Astrocyte of the cerebellum (primary cell): ENCODE measurements at regions of chr7 and their contacts with region 1.

Region 1: GRCh38 chr7:32204361-32205018 is 134.3 kb upstream of the PDE1C start:
- DNase-seq: peak; percentile 83
- H3K4me3 ChIP-seq: no peak overlapping the region
- CTCF ChIP-seq: peak; percentile 89

Region 2: GRCh38 chr7:31744294-31744874 is 460.1 kb before region 1 on chr7:
- in situ Hi-C with region 1: loop called (anchors 5 kb)
- DNase-seq: peak; percentile 74
- H3K4me3 ChIP-seq: no peak overlapping the region
- CTCF ChIP-seq: peak; percentile 79

Region 3: DNA sequence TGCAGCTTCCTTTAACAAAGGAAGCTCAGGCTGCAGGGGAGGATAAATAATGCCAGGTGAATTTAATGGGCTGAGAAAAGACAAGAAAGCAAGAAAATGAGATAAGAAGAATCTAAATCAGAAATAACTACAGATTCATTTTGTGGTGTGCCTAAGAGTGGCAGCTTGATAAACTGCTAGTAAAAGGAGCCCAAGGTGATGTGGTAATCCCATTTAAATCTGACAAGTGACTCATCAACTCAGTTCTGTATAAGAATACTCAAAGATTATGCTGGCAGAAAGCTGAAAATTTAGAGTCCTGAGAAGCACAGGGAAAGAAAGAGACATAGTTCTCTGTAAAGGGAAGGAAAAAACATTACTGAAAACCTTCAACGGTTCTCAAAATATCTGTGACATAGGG is 24.9 kb before region 1 on chr7:
- in situ Hi-C with region 1: no loop called
- DNase-seq: no peak
- H3K4me3 ChIP-seq: no peak overlapping the region
- CTCF ChIP-seq: no peak